ENCODE measurements at regions of chr7 and their contacts with region 1.

Region 1: GRCh38 chr7:69803699-69804516 is 205.6 kb downstream of the AUTS2 start:
- DNase-seq: peak; percentile 100
- ATAC-seq: peak; percentile 82
- H3K4me3 ChIP-seq: peak overlapping the region; percentile 52; the same call in 1 of the 2 replicates
- H3K27ac ChIP-seq: peak overlapping the region; percentile 97
- H3K4me1 ChIP-seq: peaks cover 55% of the 10 kb centered on the region
- H3K27me3 ChIP-seq: no peaks in the 10 kb centered on the region
- CTCF ChIP-seq: no peak
- EP300 ChIP-seq: peak; percentile 95 to 97
- POLR2A ChIP-seq: no peak
- RAD21 ChIP-seq: no peak; the same call in 1 of the 2 replicates

Region 2: DNA sequence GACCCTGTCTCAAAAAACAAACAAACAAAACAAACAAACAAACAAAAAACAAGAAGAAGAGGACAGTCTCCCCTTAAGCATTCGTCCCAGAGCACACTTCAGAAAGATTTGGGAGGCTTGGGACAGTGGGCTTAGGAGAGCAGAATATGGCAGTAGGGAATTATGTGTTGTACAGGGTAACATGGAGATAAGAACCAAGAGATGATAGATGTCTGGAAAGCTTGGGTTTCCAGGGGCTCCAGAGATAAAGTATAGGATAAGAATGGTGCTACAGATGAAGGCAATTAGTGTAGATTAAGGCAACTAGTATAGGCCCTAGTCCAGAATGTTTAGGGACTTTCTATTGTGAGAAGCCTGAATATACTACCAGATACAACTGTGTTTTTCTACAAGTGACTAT is 1140.5 kb before region 1 on chr7:
- CTCF ChIA-PET with region 1: no interaction called
- POLR2A ChIA-PET with region 1: no interaction called
- RAD21 ChIA-PET with region 1: no interaction called
- SMC1A ChIA-PET with region 1: no interaction called
- in situ Hi-C with region 1: no loop called
- intact Hi-C with region 1: no loop called
- DNase-seq: no peak
- ATAC-seq: no peak
- H3K4me3 ChIP-seq: no peak overlapping the region
- H3K27ac ChIP-seq: no peak overlapping the region
- H3K4me1 ChIP-seq: no peaks in the 10 kb centered on the region
- H3K27me3 ChIP-seq: no peaks in the 10 kb centered on the region
- CTCF ChIP-seq: no peak
- EP300 ChIP-seq: no peak
- POLR2A ChIP-seq: no peak
- RAD21 ChIP-seq: no peak

Region 3: GRCh38 chr7:69663911-69664832 is 139.7 kb before region 1 on chr7:
- CTCF ChIA-PET with region 1: interaction called, 4 read pairs
- POLR2A ChIA-PET with region 1: interaction called, 14 read pairs
- RAD21 ChIA-PET with region 1: interaction called, 12 read pairs
- SMC1A ChIA-PET with region 1: interaction called, 13 read pairs
- in situ Hi-C with region 1: no loop called
- intact Hi-C with region 1: no loop called
- DNase-seq: no peak
- ATAC-seq: peak; percentile 81
- H3K4me3 ChIP-seq: no peak overlapping the region
- H3K27ac ChIP-seq: peak overlapping the region; percentile 6; the same call in 1 of the 2 replicates
- H3K4me1 ChIP-seq: peaks cover 33% of the 10 kb centered on the region
- H3K27me3 ChIP-seq: no peaks in the 10 kb centered on the region
- CTCF ChIP-seq: no peak
- EP300 ChIP-seq: peak in 1 of 2 experiments; percentile 13; a peak in 1 of 4 replicates
- POLR2A ChIP-seq: no peak
- RAD21 ChIP-seq: no peak

Region 4: GRCh38 chr7:69748530-69748929 is 55.4 kb before region 1 on chr7:
- CTCF ChIA-PET with region 1: interaction called, 5 read pairs
- POLR2A ChIA-PET with region 1: interaction called, 13 read pairs
- RAD21 ChIA-PET with region 1: interaction called, 3 read pairs
- SMC1A ChIA-PET with region 1: interaction called, 4 read pairs
- in situ Hi-C with region 1: no loop called
- intact Hi-C with region 1: no loop called
- DNase-seq: no peak
- ATAC-seq: peak; percentile 22; the same call in 2 of the 3 replicates
- H3K4me3 ChIP-seq: no peak overlapping the region
- H3K27ac ChIP-seq: no peak overlapping the region
- H3K4me1 ChIP-seq: peaks cover 2% of the 10 kb centered on the region; the same call in 1 of the 2 replicates
- H3K27me3 ChIP-seq: no peaks in the 10 kb centered on the region
- CTCF ChIP-seq: no peak
- EP300 ChIP-seq: no peak
- POLR2A ChIP-seq: no peak
- RAD21 ChIP-seq: no peak

Region 5: DNA sequence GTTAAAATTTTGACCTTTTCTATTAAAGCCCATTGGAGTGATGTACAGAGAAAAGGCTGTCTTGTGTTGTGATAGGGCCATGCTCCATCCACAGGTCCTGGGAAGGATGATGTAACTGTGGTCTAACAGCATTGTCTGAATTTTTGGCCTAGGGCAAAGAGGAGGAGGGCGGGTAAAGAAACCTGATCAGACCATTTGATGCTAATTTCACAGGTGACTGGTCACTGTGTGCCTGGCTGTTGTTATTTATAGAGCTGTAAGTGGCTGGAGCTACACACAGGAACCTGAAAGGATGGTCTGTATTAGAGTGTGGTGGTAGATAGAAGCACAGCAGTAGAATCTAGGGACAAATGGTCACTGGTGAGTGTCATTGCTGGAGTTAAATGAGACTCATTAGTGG is 23.5 kb before region 1 on chr7:
- CTCF ChIA-PET with region 1: interaction called, 5 read pairs
- POLR2A ChIA-PET with region 1: no interaction called
- RAD21 ChIA-PET with region 1: interaction called, 12 read pairs
- SMC1A ChIA-PET with region 1: interaction called, 30 read pairs
- in situ Hi-C with region 1: no loop called
- intact Hi-C with region 1: no loop called
- DNase-seq: no peak
- ATAC-seq: peak; percentile 56
- H3K4me3 ChIP-seq: no peak overlapping the region
- H3K27ac ChIP-seq: no peak overlapping the region
- H3K4me1 ChIP-seq: peaks cover 7% of the 10 kb centered on the region
- H3K27me3 ChIP-seq: no peaks in the 10 kb centered on the region
- CTCF ChIP-seq: no peak
- EP300 ChIP-seq: no peak
- POLR2A ChIP-seq: no peak
- RAD21 ChIP-seq: no peak

Region 6: DNA sequence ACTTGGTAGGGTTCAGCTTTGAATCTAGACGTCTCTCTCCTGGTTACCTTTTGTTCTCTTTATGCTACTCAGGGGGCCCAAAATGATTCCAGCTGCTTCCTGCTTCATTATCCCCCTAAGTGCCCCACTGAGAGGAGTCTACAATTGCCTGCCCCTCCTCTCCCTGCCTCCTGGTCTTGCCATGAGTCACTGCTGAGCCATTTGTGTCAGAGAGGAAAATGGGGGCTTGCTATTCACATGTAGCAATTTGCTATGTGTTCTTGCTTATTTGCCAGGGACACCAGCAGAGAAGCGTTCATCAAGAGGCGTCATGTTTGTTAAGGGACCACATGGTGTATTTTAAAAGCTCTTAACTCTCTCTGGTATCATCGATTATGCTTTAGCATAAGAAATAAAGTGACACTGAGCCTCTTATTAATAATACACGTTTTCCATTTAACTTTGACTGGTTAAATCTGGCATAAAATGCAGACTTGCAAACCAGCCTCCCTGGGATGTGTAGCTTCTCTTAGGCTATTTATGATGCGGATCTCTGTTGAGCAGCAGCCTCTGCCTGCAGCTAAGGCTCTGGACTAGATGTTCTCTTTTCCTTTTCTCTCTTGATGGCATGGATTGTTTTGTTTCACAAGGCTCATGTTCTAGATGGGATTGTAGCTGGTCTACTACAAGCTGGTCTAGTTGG is 33.6 kb after region 1 on chr7:
- CTCF ChIA-PET with region 1: interaction called, 3 read pairs
- POLR2A ChIA-PET with region 1: interaction called, 5 read pairs
- RAD21 ChIA-PET with region 1: interaction called, 18 read pairs
- SMC1A ChIA-PET with region 1: interaction called, 5 read pairs
- in situ Hi-C with region 1: no loop called
- intact Hi-C with region 1: no loop called
- DNase-seq: no peak
- ATAC-seq: no peak
- H3K4me3 ChIP-seq: no peak overlapping the region
- H3K27ac ChIP-seq: no peak overlapping the region
- H3K4me1 ChIP-seq: peaks cover 29% of the 10 kb centered on the region
- H3K27me3 ChIP-seq: no peaks in the 10 kb centered on the region
- CTCF ChIP-seq: no peak
- EP300 ChIP-seq: no peak
- POLR2A ChIP-seq: no peak
- RAD21 ChIP-seq: no peak

Region 7: GRCh38 chr7:69906283-69906995 is 102.5 kb after region 1 on chr7:
- CTCF ChIA-PET with region 1: no interaction called
- POLR2A ChIA-PET with region 1: interaction called, 4 read pairs
- RAD21 ChIA-PET with region 1: interaction called, 5 read pairs
- SMC1A ChIA-PET with region 1: interaction called, 6 read pairs
- in situ Hi-C with region 1: no loop called
- intact Hi-C with region 1: loop called (anchors 5 kb)
- DNase-seq: peak; percentile 97
- ATAC-seq: peak; percentile 90
- H3K4me3 ChIP-seq: no peak overlapping the region
- H3K27ac ChIP-seq: peak overlapping the region; percentile 88
- H3K4me1 ChIP-seq: peaks cover 22% of the 10 kb centered on the region
- H3K27me3 ChIP-seq: no peaks in the 10 kb centered on the region
- CTCF ChIP-seq: no peak
- EP300 ChIP-seq: peak; percentile 94 to 96
- POLR2A ChIP-seq: no peak
- RAD21 ChIP-seq: no peak

Measured in GM12878 (cell line).